ENCODE measurements at regions of chr20 and their contacts with region 1.

Region 1: GRCh38 chr20:47847868-47848531 is 62.7 kb upstream of the SULF2 start:
- DNase-seq: no peak
- H3K4me3 ChIP-seq: no peak overlapping the region
- H3K27ac ChIP-seq: no peak overlapping the region
- H3K4me1 ChIP-seq: peaks cover 4% of the 10 kb centered on the region
- H3K27me3 ChIP-seq: no peaks in the 10 kb centered on the region
- CTCF ChIP-seq: no peak
- POLR2A ChIP-seq: no peak

Region 2: DNA sequence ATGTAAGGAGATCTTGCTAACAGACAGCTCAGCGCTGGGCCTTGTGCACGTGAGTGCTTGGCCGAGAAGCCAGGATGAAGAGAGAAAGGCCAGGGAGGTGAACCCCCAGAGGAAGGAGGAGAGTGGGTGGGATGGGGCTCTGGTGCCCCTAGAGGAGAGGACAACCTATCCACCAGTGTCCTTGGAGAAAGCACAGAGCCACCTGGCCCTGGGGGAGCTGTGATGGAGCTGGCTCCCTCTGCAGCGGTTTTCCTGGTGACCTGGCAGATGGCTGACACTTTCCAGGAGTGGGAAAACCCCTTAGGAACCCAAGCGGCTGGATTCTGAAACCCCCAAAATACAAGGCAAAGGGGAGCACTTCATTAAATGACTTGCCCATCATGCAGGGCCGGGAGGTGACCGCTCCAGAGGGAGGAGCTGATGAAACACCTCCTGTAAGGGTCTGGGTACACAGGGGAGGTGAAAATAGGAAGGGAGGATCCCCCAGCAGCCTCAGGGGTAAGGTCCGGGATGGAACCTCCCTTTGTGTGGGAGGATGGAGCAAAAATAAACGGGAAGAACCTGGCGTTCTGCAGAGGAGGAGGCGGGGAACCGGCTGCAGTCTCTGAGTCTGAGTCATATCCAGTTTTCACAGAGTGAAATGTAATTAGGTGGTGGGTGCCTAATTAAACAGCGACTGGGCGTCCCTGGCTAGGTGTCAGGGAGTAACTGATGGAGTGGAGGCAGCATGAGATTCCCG is 143.1 kb before region 1 on chr20:
- CTCF ChIA-PET with region 1: no interaction called
- POLR2A ChIA-PET with region 1: no interaction called
- dilution Hi-C with region 1: no loop called
- intact Hi-C with region 1: no loop called
- DNase-seq: no peak
- H3K4me3 ChIP-seq: no peak overlapping the region
- H3K27ac ChIP-seq: no peak overlapping the region
- H3K4me1 ChIP-seq: peaks cover 4% of the 10 kb centered on the region
- H3K27me3 ChIP-seq: no peaks in the 10 kb centered on the region
- CTCF ChIP-seq: no peak
- POLR2A ChIP-seq: no peak

Region 3: DNA sequence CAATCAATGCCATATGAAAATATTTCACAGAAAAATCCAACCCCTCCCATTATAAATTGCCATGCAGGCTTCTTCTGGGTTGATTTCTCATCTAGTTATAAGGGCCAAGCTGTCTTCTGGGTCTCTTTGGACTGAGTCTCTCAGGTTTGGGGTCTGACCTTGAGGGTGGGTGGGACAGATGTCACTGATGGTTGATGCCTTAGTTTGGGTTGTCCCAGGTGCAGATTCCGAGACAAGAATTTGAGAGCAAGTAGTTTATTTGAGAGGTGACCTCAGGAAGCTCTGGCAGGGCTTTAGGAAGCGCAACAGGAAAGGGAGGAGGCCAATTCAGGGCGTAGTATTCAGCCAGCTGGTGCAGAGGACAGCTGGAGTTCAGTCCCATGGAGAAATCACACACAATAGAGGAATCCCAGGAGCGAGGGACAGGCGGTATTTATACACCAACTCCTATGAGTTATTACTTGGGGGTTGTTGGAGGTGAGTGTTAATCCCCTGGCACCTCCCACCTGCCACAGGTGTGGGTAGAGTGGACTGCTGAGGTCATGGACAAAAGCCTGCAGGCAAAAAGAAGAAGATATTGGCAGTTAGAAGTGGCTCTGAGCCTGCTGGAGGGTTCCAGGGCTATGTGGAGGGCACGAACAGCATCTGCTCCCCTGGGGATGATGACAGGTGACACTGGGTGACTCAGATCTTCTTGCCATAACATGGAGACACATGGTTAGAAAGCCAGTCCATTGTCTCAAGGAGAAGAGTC is 48.9 kb before region 1 on chr20:
- CTCF ChIA-PET with region 1: no interaction called
- POLR2A ChIA-PET with region 1: no interaction called
- dilution Hi-C with region 1: no loop called
- intact Hi-C with region 1: loop called (anchors 1 kb)
- DNase-seq: peak; percentile 66
- H3K4me3 ChIP-seq: no peak overlapping the region
- H3K27ac ChIP-seq: no peak overlapping the region
- H3K4me1 ChIP-seq: peaks cover 6% of the 10 kb centered on the region
- H3K27me3 ChIP-seq: peaks cover 0 to 2% of the 10 kb centered on the region in 2 experiments
- CTCF ChIP-seq: no peak
- POLR2A ChIP-seq: no peak

Region 4: DNA sequence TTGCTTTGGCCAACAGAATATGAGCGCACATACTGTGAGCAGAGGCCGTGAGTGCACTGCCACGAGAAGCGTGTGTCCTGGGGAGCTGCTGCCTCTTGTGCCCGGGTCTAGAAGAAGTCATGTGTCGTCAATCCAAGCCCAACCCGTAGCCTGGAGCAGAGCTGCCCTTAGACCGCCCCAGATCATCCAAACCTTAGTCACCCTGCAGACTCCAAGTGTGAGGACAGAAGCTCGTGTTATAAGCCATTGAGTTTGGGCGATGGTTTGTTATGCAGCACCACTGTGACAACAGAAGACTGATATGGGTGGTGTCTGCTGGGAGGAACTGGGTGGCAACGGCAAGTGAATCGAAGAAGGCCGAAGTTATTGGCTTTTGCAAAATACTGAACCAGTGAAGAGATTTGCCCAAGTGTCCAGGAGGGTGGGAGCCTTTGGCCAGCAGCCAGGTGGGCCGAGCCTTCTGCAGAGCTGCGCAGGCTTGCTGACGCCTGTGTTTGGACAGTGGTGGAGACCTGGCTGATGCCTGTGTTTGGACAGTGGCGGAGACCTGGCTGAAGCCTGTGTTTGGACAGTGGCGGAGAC is 38.6 kb after region 1 on chr20:
- CTCF ChIA-PET with region 1: no interaction called
- POLR2A ChIA-PET with region 1: no interaction called
- dilution Hi-C with region 1: no loop called
- intact Hi-C with region 1: loop called (anchors 10 kb)
- DNase-seq: no peak
- H3K4me3 ChIP-seq: no peak overlapping the region
- H3K27ac ChIP-seq: no peak overlapping the region
- H3K4me1 ChIP-seq: no peaks in the 10 kb centered on the region
- H3K27me3 ChIP-seq: no peaks in the 10 kb centered on the region
- CTCF ChIP-seq: no peak
- POLR2A ChIP-seq: no peak